MCF 10A (cell line): ENCODE measurements at regions of chrX and their contacts with region 1.

Region 1: DNA sequence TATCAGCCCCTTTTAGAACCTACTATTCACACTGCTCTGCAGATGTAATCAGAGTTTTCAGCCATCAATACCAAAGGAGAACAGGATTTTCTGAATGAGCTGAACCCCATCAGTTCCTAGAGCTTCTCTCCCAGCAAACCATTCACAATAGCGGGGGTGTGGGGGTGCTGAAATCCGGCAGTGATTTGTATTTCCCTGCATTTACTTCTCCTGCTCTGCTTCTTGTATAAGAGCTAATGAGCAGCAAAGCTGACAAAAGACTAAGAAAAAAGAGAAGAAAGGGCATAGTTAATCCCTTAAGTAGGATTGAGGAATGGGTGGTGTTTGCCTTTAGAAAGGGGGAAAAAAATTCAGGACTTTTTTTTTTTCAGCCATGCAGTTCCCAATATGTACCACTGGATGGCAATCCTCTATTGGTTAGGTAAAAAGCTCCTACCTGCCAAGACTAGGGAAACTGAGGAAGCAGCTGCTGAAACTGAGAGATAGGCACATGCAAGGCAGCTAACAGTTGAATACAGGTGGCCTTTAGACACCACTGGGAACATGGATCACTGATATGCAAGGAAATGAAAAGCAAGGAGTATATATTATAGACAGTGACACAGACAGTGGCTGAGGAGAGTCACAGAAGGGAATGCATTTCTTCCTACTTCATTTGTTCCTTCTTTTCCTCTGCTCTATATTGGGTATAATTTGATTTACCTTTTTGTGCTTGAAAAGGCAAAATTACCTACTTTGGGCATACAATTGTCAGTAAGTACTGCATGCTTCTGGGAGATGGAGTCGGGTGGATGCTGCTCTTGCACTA is 217.9 kb downstream of the HS6ST2 start:
- DNase-seq: peak; percentile 28
- H3K4me3 Mint-ChIP-seq: no peak overlapping the region
- H3K27ac Mint-ChIP-seq: no peak overlapping the region
- H3K4me1 Mint-ChIP-seq: peaks cover 6% of the 10 kb centered on the region
- H3K27me3 Mint-ChIP-seq: peaks cover 63% of the 10 kb centered on the region
- CTCF ChIP-seq: peak; percentile 83

Region 2: DNA sequence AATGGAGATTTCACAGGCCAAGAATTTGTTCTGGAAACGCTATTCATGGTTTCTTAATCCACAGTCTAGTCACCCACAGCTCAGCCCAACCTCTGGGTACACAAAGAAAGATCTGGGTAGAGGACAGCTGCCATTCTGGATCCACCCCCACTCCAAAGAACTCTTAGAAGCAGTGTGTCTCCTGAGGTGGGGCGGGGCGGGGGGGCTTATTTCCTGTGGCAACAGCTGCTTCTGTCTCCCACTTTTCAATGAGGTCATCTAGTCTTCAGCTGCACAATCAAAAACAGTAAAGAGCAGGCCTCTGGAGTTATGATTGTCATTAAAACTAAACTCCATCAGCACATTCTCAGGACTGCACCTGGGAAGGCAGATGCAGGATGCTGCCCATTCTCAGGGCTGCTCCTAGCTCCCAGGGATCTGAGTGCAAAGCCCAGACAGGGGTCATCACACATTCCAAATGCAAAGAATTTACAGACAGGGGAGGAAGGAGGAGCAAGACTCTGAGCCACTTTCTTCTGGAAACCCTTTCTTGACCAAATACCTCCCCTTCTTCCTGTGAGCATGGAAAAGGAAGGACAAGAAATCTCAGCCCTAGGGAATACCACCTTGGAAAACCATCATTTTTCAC is 10.7 kb after region 1 on chrX:
- CTCF ChIA-PET with region 1: interaction called, 26 read pairs
- POLR2A ChIA-PET with region 1: no interaction called
- intact Hi-C with region 1: no loop called
- DNase-seq: no peak
- H3K4me3 Mint-ChIP-seq: no peak overlapping the region
- H3K27ac Mint-ChIP-seq: no peak overlapping the region
- H3K4me1 Mint-ChIP-seq: no peaks in the 10 kb centered on the region
- H3K27me3 Mint-ChIP-seq: peaks cover 74% of the 10 kb centered on the region
- CTCF ChIP-seq: no peak

Region 3: GRCh38 chrX:132957211-132958090 is 216.9 kb after region 1 on chrX:
- CTCF ChIA-PET with region 1: interaction called, 7 read pairs
- POLR2A ChIA-PET with region 1: no interaction called
- intact Hi-C with region 1: loop called (anchors 1 kb)
- DNase-seq: peak; percentile 23
- H3K4me3 Mint-ChIP-seq: peak overlapping the region; percentile 79
- H3K27ac Mint-ChIP-seq: no peak overlapping the region
- H3K4me1 Mint-ChIP-seq: peaks cover 3% of the 10 kb centered on the region
- H3K27me3 Mint-ChIP-seq: peaks cover 3% of the 10 kb centered on the region
- CTCF ChIP-seq: no peak

Region 4: GRCh38 chrX:133171962-133172708 is 431.6 kb after region 1 on chrX:
- CTCF ChIA-PET with region 1: interaction called, 17 read pairs
- POLR2A ChIA-PET with region 1: no interaction called
- intact Hi-C with region 1: no loop called
- DNase-seq: peak; percentile 56
- H3K4me3 Mint-ChIP-seq: no peak overlapping the region
- H3K27ac Mint-ChIP-seq: no peak overlapping the region
- H3K4me1 Mint-ChIP-seq: no peaks in the 10 kb centered on the region
- H3K27me3 Mint-ChIP-seq: peaks cover 67% of the 10 kb centered on the region
- CTCF ChIP-seq: peak; percentile 71